Heart right ventricle (tissue), 16 donors: ENCODE measurements at regions of chr20 and their contacts with region 1.

Region 1: GRCh38 chr20:45059022-45059728 is 41.8 kb downstream of the KCNS1 start:
- DNase-seq: no peak
- ATAC-seq: no peak
- H3K4me3 ChIP-seq: no peak overlapping the region
- H3K27ac ChIP-seq: no peak overlapping the region
- H3K4me1 ChIP-seq: no peaks in the 10 kb centered on the region
- H3K27me3 ChIP-seq: no peaks in the 10 kb centered on the region
- CTCF ChIP-seq: no peak

Region 2: GRCh38 chr20:46004889-46005473 is 945.8 kb after region 1 on chr20:
- intact Hi-C with region 1: loop called in 1 of 10 experiments (anchors 5 kb)
- DNase-seq: peak in 1 of 2 donors; percentile 48
- ATAC-seq: peak; percentile 42 to 79 (median 76)
- H3K4me3 ChIP-seq: peak overlapping the region in 1 of 10 donors; percentile 20
- H3K27ac ChIP-seq: peak overlapping the region in 1 of 10 donors; percentile 78
- H3K4me1 ChIP-seq: peaks cover 0 to 81% (median 7%) of the 10 kb centered on the region in 9 donors
- H3K27me3 ChIP-seq: peaks cover 0 to 97% (median 64%) of the 10 kb centered on the region in 7 donors
- CTCF ChIP-seq: no peak